Endothelial cell of umbilical vein (primary cell): ENCODE measurements at regions of chr3 and their contacts with region 1.

Region 1: DNA sequence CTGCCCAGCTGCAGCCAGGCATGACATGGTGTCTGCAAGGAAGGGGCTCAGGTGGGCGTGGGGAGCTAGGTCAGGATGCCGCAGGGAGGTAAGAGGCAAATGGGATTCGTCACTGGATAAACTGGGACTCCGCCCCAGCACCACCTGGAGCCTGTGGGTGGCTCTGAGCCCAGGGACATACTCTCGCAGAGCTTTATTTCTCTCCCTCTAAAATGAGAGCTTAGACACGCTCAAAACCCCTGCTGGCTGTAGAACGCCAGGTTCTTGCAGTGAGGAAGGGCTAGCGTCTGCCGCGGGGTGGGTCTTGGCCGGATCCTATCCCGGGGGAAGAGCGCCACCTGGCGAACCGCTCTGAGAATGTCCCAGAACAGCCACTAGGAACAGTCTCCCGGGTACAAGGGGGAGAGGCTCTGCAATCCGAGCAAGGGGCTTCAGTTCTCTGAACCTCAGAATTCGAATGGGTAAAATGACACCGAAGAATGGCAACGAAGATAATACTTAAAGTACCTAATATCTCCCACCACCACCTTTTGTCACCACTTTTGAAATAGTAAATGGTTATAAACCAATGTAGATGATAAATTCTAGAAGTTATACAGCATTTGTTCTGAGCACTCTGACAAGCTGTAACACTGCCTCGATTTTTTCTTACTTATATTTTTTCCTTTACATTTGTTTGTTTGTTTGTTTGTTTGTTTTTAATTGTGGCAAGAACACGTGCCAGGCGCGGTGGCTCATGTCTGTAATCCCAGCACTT is 53.2 kb upstream of the SRGAP3 start:
- DNase-seq: peak; percentile 79
- H3K4me3 ChIP-seq: no peak overlapping the region
- H3K27ac ChIP-seq: no peak overlapping the region
- H3K4me1 ChIP-seq: no peaks in the 10 kb centered on the region
- H3K27me3 ChIP-seq: peaks cover 0 to 4% of the 10 kb centered on the region in 2 experiments
- CTCF ChIP-seq: peak; percentile 88 to 89
- POLR2A ChIP-seq: no peak

Region 2: GRCh38 chr3:8663177-8664061 is 639.2 kb before region 1 on chr3:
- CTCF ChIA-PET with region 1: interaction called, 16 read pairs
- POLR2A ChIA-PET with region 1: no interaction called
- dilution Hi-C with region 1: no loop called
- intact Hi-C with region 1: no loop called
- DNase-seq: peak; percentile 66
- H3K4me3 ChIP-seq: no peak overlapping the region
- H3K27ac ChIP-seq: no peak overlapping the region
- H3K4me1 ChIP-seq: peaks cover 4% of the 10 kb centered on the region
- H3K27me3 ChIP-seq: peaks cover 0 to 8% of the 10 kb centered on the region in 2 experiments
- CTCF ChIP-seq: peak; percentile 52 to 67
- POLR2A ChIP-seq: no peak

Region 3: DNA sequence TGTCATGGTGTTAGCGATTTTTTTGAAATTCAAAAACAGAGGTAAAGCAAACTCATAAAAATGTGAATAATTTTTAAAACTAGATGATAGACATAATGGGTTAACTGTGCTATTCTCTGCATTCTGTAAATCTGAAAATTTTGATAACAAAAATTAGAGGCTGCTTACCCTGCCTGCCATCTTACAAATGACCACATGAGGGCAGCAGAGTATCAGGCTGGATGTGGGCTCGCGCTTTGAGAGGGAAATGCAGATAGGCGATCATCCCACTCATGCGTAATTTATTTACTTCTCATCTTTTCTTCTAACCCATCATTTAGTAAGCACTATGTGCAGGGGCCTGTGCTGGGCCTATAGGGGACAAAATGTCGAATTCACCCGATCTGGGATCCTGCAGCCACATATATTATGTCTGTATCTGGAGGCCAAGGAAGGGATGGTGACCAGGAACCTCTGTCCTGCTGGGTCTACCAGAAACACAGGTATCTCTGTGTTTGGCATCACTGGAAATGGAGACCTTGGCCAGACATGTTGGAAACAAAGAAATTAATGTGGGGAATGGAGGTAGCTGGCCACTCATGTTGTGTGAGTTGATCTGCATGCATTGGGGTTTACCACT is 331.5 kb before region 1 on chr3:
- CTCF ChIA-PET with region 1: interaction called, 49 read pairs
- POLR2A ChIA-PET with region 1: no interaction called
- dilution Hi-C with region 1: no loop called
- intact Hi-C with region 1: loop called (anchors 1 kb)
- DNase-seq: peak; percentile 60
- H3K4me3 ChIP-seq: no peak overlapping the region
- H3K27ac ChIP-seq: no peak overlapping the region
- H3K4me1 ChIP-seq: no peaks in the 10 kb centered on the region
- H3K27me3 ChIP-seq: peaks cover 2 to 8% of the 10 kb centered on the region in 2 experiments
- CTCF ChIP-seq: peak; percentile 82 to 89
- POLR2A ChIP-seq: no peak

Region 4: DNA sequence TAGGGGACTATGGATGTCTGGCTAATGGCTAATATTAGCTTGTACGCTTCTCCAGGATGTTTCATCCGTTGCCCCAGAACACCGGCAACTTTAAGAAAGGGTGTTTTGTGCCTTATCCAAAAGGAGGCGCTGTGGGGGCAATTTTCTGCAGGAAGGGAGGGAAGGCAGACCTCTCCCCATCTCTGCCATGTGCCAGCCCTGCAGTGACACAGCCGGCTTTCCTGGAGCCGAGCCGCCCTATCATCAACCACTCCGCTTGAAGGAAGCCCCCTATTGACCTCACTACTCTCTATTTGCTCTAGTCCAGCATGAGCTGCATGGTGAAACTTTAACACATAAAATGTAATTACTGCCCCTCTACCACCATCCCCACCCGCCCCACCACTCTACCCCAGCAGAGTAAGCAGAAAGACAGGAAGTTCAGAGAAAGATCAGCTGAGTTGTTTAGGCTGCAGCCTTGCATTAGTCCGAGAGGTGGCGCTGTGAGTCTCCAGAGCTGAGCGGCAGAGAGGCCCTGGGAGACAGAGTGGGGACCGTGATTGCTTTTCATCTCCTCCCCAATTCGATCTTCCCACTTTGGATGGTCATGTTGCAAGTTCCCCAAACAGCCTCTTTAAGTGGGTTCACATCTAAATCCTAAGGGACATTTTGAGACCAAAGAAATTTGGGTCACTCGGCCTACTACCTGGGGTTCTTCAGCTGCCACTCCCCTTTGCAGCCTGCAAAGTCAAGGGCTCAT is 314.8 kb before region 1 on chr3:
- CTCF ChIA-PET with region 1: interaction called, 86 read pairs
- POLR2A ChIA-PET with region 1: interaction called, 3 read pairs
- dilution Hi-C with region 1: no loop called
- intact Hi-C with region 1: loop called (anchors 1 kb)
- DNase-seq: peak; percentile 67
- H3K4me3 ChIP-seq: no peak overlapping the region
- H3K27ac ChIP-seq: no peak overlapping the region
- H3K4me1 ChIP-seq: no peaks in the 10 kb centered on the region
- H3K27me3 ChIP-seq: no peaks in the 10 kb centered on the region
- CTCF ChIP-seq: peak; percentile 70 to 88
- POLR2A ChIP-seq: no peak

Region 5: DNA sequence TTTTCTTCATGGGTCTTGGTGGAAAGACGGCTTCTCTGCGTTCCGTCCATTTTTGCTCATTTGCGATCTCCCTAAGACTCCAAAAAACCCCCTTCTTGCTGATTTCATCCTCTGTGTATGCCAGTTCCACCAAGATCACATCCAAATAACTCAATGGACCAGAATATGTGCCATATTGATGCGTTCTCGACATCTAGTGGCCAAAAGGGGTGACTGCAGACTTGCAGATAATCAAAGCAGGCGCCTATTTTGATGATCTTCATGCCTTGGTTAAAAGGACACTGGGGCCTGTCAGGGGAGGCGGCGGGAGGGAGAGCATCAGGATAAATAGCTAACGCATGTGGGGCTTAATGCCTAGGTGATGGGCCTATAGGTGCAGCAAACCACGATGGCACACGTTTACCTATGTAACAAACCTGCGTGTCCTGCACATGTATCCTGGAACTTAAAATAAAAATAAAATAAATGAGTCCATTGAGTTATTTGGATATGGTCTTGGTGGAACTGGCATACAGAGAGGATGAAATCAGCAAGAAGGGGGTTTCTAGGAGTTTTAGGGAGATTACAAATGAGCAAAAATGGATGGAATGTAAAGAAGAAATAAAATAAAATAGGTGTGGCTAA is 235.1 kb before region 1 on chr3:
- CTCF ChIA-PET with region 1: interaction called, 5 read pairs
- POLR2A ChIA-PET with region 1: no interaction called
- dilution Hi-C with region 1: no loop called
- intact Hi-C with region 1: loop called (anchors 5 kb)
- DNase-seq: peak; percentile 61
- H3K4me3 ChIP-seq: no peak overlapping the region
- H3K27ac ChIP-seq: no peak overlapping the region
- H3K4me1 ChIP-seq: no peaks in the 10 kb centered on the region
- H3K27me3 ChIP-seq: no peaks in the 10 kb centered on the region
- CTCF ChIP-seq: peak; percentile 78
- POLR2A ChIP-seq: no peak

Region 6: GRCh38 chr3:9316881-9317361 is 14.3 kb after region 1 on chr3:
- CTCF ChIA-PET with region 1: interaction called, 15 read pairs
- POLR2A ChIA-PET with region 1: no interaction called
- dilution Hi-C with region 1: no loop called
- intact Hi-C with region 1: no loop called
- DNase-seq: peak; percentile 81
- H3K4me3 ChIP-seq: peak overlapping the region in 2 of 3 experiments; percentile 16 to 42
- H3K27ac ChIP-seq: peak overlapping the region; percentile 73
- H3K4me1 ChIP-seq: peaks cover 11% of the 10 kb centered on the region
- H3K27me3 ChIP-seq: no peaks in the 10 kb centered on the region
- CTCF ChIP-seq: no peak
- POLR2A ChIP-seq: no peak

Region 7: DNA sequence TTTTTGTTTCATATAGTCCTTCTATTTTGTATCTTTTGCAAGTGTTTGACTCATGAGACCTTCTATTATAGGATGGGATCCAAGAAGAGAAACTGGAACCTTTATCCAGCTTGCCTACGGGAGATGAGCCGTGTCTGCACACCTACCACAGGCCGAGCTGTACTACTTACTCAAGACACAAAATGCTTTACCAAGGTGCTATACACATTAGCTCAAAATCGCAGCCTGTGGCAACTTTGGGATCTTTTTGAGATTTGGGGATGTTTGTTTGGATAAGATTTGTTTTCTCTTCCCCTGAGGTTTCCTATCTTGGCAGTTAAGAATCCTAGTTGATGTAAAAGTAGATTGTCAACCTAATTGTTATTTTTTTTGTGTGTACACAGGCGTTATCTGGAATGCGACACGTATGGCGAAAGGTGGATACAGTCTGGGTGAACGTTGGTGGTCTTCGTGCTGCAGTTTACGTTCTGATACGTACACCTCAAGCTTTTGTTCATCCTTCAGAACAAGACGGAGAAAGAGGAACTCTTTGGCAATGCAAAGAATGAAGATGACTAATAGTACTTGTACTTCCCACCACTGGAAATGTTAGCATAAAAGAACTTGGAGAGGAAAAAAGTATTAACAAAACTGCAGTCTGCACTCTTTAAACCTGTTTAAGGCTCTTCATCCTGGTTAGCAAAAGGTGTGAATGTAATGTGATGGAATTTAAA is 81.7 kb after region 1 on chr3:
- CTCF ChIA-PET with region 1: no interaction called
- POLR2A ChIA-PET with region 1: no interaction called
- dilution Hi-C with region 1: no loop called
- intact Hi-C with region 1: no loop called
- DNase-seq: no peak
- H3K4me3 ChIP-seq: no peak overlapping the region
- H3K27ac ChIP-seq: no peak overlapping the region
- H3K4me1 ChIP-seq: no peaks in the 10 kb centered on the region
- H3K27me3 ChIP-seq: no peaks in the 10 kb centered on the region
- CTCF ChIP-seq: no peak
- POLR2A ChIP-seq: no peak